ENCODE measurements at regions of chr7 and their contacts with region 1.

Region 1: GRCh38 chr7:149067876-149068275 is 22.6 kb downstream of the ZNF786 start:
- DNase-seq: no peak
- H3K4me3 ChIP-seq: no peak overlapping the region
- H3K27ac ChIP-seq: no peak overlapping the region
- H3K4me1 ChIP-seq: peaks cover 4% of the 10 kb centered on the region; the same call in 1 of the 2 replicates
- H3K27me3 ChIP-seq: no peaks in the 10 kb centered on the region
- CTCF ChIP-seq: peak; percentile 47; the same call in 1 of the 2 replicates

Region 2: GRCh38 chr7:148633761-148634160 is 434.1 kb before region 1 on chr7:
- CTCF ChIA-PET with region 1: no interaction called
- POLR2A ChIA-PET with region 1: no interaction called
- intact Hi-C with region 1: no loop called
- DNase-seq: no peak
- H3K4me3 ChIP-seq: no peak overlapping the region
- H3K27ac ChIP-seq: no peak overlapping the region
- H3K4me1 ChIP-seq: no peaks in the 10 kb centered on the region
- H3K27me3 ChIP-seq: 0 out of 2 replicates have a peak, but pooled peaks cover 3% of the 10 kb centered on the region
- CTCF ChIP-seq: no peak

Region 3: GRCh38 chr7:148987010-148987750 is 80.7 kb before region 1 on chr7:
- CTCF ChIA-PET with region 1: no interaction called
- POLR2A ChIA-PET with region 1: interaction called, 4 read pairs
- intact Hi-C with region 1: loop called (anchors 5 kb)
- DNase-seq: peak; percentile 86 to 91
- H3K4me3 ChIP-seq: peak overlapping the region; percentile 88
- H3K27ac ChIP-seq: peak overlapping the region; percentile 78
- H3K4me1 ChIP-seq: peaks cover 46% of the 10 kb centered on the region
- H3K27me3 ChIP-seq: no peaks in the 10 kb centered on the region
- CTCF ChIP-seq: no peak

Region 4: DNA sequence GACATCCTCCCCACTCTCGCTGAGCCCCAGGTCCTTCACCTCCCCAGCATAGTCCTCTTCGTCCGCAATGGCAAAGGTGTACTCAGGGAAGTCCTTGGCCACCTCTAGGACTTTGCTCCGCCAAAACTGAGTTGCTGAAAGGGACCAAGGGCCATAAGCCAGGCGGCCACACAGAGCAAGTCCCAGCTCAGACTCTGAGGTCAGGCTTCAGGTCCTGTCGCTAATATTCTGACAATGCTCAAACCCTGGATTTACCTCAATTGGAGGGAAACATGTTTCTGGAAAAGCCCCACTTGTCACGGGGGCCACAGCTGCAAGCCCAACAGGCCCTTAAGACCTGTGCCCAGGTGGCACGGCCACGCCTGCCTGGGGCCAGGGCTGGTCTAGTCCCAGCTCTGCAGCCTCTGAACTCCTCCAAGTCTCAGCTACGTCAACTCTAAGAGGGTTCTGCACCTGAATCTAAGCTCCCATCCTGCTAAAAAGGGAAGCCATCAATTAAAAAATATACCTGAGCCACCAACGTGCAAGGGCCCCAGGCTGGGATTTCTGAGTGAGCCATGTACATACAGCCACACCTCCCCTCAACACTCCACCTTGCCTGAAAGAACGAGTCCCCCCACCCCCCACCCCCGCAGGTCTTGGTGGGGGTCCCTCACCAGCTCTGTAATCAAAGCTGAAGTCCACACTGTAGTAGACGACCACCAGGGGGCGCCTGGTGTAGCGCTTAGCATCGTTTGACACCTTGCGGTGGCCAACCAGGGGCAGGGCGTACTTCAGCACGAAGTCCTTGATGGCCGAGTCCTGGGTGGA is 62.4 kb before region 1 on chr7:
- CTCF ChIA-PET with region 1: interaction called, 5 read pairs
- POLR2A ChIA-PET with region 1: no interaction called
- intact Hi-C with region 1: loop called (anchors 5 kb)
- DNase-seq: peak in 1 of 2 experiments; percentile 37
- H3K4me3 ChIP-seq: no peak overlapping the region
- H3K27ac ChIP-seq: no peak overlapping the region
- H3K4me1 ChIP-seq: no peaks in the 10 kb centered on the region
- H3K27me3 ChIP-seq: no peaks in the 10 kb centered on the region
- CTCF ChIP-seq: peak; percentile 85

Region 5: GRCh38 chr7:149021725-149022062 is 46.2 kb before region 1 on chr7:
- CTCF ChIA-PET with region 1: no interaction called
- POLR2A ChIA-PET with region 1: interaction called, 11 read pairs
- intact Hi-C with region 1: no loop called
- DNase-seq: no peak
- H3K4me3 ChIP-seq: no peak overlapping the region
- H3K27ac ChIP-seq: no peak overlapping the region
- H3K4me1 ChIP-seq: peaks cover 9% of the 10 kb centered on the region
- H3K27me3 ChIP-seq: no peaks in the 10 kb centered on the region
- CTCF ChIP-seq: no peak

Region 6: DNA sequence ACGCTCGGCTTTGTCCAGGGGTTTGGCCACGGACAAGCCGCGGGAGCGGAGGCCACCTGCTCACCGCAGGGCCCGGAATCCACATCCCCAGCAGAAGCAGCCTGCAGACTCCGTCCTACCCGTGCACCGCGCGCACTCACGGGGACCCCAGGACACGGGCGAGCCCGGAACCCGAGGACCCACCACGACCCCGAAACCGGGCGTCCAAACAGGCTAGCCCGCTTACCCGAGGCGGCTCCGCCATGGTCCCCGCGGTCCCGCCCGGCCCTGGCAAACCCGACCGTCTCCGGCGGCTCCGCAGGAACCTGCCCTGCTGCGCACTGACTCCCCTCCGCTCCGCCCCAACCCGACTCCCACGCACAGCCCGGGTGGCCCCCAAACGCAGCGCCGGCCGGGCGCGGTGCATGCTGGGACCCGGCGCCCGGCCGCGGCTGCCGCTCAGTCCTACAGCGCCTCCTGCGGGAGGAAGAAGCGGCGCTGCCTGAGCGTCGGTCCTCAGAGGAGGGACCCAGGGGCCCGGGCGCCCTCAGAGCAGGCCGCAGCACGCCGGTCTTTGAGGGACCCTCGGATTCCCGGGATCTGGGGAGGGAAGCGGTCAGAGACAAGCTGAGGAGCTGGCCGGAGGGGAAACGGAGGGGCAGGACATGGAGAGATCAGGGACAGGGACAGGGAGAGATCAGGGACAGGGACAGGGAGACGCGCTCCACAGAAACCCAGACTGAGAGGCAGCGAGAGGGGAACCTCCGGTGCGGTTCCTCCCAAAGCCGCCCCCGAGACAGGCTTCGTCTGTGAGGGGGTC is 22.7 kb after region 1 on chr7 and contains the start of gene ZNF786:
- CTCF ChIA-PET with region 1: no interaction called
- POLR2A ChIA-PET with region 1: interaction called, 4 read pairs
- intact Hi-C with region 1: loop called (anchors 2 kb)
- DNase-seq: peak; percentile 71 to 87
- H3K4me3 ChIP-seq: peak within 1 kb of the TSS; percentile 96
- H3K27ac ChIP-seq: peak within 1 kb of the TSS; percentile 85
- H3K4me1 ChIP-seq: no peaks in the 10 kb centered on the region; the same call in 1 of the 2 replicates
- H3K27me3 ChIP-seq: no peaks in the 10 kb centered on the region
- CTCF ChIP-seq: peak; percentile 92
- total RNA-seq, gene ZNF786: 7.0 and 8.4 TPM in 2 replicates